Calu3 (cell line): ENCODE measurements at regions of chrX and their contacts with region 1.

Region 1: DNA sequence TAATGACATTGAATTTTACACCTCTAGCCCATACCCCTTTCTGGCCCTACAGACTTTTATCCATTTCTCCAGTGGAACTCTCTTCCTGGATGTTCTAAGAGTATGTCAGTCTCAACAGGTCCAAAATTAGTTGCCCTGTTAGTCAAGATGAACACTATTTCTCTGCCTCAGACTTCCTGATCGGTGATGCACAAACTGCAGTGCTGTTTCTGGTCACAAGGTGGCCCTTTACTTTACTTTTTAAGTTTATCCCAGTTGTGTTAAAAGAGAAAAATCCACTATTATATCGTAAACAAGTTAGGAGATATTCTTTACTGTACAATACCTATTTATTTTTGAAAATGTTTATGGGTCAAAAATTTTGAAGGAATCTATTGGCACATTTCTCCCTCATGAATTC is 13.1 kb downstream of the TCEAL7 start:
- DNase-seq: peak; percentile 43
- H3K4me3 Mint-ChIP-seq: no peak overlapping the region
- H3K27ac Mint-ChIP-seq: no peak overlapping the region
- H3K4me1 Mint-ChIP-seq: no peaks in the 10 kb centered on the region
- H3K27me3 Mint-ChIP-seq: no peaks in the 10 kb centered on the region
- CTCF ChIP-seq: peak; percentile 36

Region 2: DNA sequence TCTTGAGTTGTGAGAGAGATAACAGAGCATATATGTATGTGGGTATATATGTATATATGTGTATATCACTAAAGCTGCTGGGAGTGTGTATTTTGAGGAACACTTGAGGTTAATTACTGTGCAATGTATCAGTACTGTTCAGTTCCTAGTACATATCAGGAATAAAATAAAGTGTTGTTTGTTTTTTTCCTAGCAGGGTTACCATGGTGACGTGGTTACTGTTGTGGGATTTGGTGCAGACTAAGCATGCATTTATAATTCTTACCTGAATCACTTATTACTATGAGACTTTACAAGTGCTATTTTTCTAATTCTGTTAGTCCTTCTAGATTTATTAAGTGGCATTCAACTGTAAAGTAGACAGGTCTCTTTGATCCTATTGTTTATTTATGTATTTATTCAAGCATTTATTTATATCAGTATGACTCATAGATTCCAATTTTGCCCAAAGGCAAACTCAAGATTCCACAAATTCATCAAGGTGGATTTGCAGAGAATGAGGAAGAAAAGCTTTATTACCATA is 155.1 kb before region 1 on chrX:
- CTCF ChIA-PET with region 1: no interaction called
- intact Hi-C with region 1: no loop called
- DNase-seq: no peak
- H3K4me3 Mint-ChIP-seq: no peak overlapping the region
- H3K27ac Mint-ChIP-seq: no peak overlapping the region
- H3K4me1 Mint-ChIP-seq: no peaks in the 10 kb centered on the region
- H3K27me3 Mint-ChIP-seq: peaks cover 11% of the 10 kb centered on the region
- CTCF ChIP-seq: no peak

Region 3: GRCh38 chrX:103464774-103465117 is 121.6 kb after region 1 on chrX:
- CTCF ChIA-PET with region 1: interaction called, 10 read pairs
- intact Hi-C with region 1: loop called (anchors 1 kb)
- DNase-seq: peak; percentile 78
- H3K4me3 Mint-ChIP-seq: no peak overlapping the region
- H3K27ac Mint-ChIP-seq: no peak overlapping the region
- H3K4me1 Mint-ChIP-seq: peaks cover 18% of the 10 kb centered on the region
- H3K27me3 Mint-ChIP-seq: no peaks in the 10 kb centered on the region
- CTCF ChIP-seq: peak; percentile 75

Region 4: DNA sequence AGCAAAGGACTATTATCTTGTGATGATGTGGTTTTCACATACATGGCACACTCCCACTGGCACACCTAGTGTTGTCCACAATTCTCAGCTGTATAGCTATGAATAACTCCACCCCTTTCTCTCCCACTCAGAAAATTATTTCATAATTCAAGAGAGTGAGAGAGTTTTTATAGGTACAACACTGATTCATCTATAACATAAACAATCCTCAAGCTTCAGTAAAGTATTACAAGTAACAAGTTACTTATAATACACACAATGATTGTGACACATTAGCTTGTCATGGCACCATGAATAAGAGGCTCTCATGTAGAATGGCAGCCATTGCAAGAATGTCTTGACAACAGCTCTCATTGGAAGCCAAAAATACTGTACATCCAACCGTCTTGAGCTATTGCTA is 132.3 kb after region 1 on chrX:
- CTCF ChIA-PET with region 1: no interaction called
- intact Hi-C with region 1: no loop called
- DNase-seq: no peak
- H3K4me3 Mint-ChIP-seq: no peak overlapping the region
- H3K27ac Mint-ChIP-seq: no peak overlapping the region
- H3K4me1 Mint-ChIP-seq: no peaks in the 10 kb centered on the region
- H3K27me3 Mint-ChIP-seq: no peaks in the 10 kb centered on the region
- CTCF ChIP-seq: no peak